ENCODE measurements at regions of chr17 and their contacts with region 1.

Region 1: GRCh38 chr17:40345161-40345993 is 19.2 kb downstream of the GJD3 start:
- DNase-seq: peak; percentile 61
- H3K4me3 ChIP-seq: peak overlapping the region in 2 of 3 experiments; percentile 11 to 31
- H3K27ac ChIP-seq: no peak overlapping the region
- H3K4me1 ChIP-seq: peaks cover 80% of the 10 kb centered on the region
- H3K27me3 ChIP-seq: no peaks in the 10 kb centered on the region
- CTCF ChIP-seq: no peak

Region 2: DNA sequence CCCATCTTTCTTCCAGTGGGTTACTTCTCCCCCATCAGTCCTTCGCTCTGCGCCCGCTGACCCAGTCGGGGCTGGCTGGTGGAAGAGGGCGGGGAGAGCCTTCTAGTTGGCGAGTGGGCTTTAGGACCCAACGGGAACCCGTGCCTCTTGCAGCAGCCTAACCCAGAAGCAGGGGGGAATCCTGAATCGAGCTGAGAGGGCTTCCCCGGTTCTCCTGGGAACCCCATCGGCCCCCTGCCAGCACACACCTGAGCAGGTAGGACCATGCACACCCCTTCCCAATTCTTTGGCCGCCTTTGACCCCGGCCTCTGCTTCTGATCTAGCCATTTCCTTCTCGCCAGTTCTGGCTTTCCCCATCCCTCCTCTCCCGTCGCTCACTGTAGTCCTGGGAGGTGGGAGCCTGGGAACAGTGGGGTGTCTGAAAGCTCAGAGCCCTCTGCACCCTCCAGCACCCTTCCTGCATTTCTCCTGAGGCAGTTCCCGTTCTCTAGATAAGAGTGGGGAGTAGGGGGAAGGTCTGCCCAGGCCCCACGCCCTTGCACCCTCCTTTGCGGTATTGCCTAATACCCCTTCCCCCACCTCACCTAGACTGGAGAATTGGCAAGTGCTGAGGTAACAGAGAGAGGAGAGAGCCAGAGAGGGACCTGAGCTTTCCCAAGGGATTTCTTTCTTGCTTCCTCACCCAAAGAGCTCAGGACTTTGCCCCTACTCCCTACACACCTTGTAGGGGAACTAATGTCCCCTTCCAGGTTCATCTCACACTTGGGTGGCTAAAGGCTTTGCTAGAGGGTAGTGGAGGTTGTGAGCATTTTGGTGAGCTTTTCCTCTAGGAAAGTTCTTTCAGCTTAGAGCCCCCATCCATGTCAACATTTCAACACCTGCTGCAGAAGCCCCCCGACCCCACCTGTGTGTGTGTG is 36.1 kb before region 1 on chr17 and contains the start of gene RARA:
- CTCF ChIA-PET with region 1: interaction called, 4 read pairs
- dilution Hi-C with region 1: no loop called
- in situ Hi-C with region 1: loop called (anchors 5 kb)
- intact Hi-C with region 1: no loop called
- DNase-seq: no peak
- H3K4me3 ChIP-seq: peak within 1 kb of the TSS in 2 of 3 experiments; percentile 9 to 39
- H3K27ac ChIP-seq: no peak within 1 kb of the TSS
- H3K4me1 ChIP-seq: peaks cover 65% of the 10 kb centered on the region
- H3K27me3 ChIP-seq: no peaks in the 10 kb centered on the region
- CTCF ChIP-seq: no peak
- total RNA-seq, gene RARA: 12.7 to 26.6 TPM

Measured in mammary epithelial cell (primary cell).